ENCODE measurements at regions of chr16 and their contacts with region 1.

Region 1: GRCh38 chr16:56814537-56815432 is 50.2 kb upstream of the SLC12A3 start:
- DNase-seq: peak; percentile 65 to 86
- H3K4me3 ChIP-seq: no peak overlapping the region
- H3K4me3 Mint-ChIP-seq: peak overlapping the region; percentile 53
- H3K27ac Mint-ChIP-seq: peak overlapping the region; percentile 81
- H3K4me1 ChIP-seq: peaks cover 71% of the 10 kb centered on the region
- H3K4me1 Mint-ChIP-seq: peaks cover 39% of the 10 kb centered on the region
- H3K27me3 ChIP-seq: no peaks in the 10 kb centered on the region
- H3K27me3 Mint-ChIP-seq: no peaks in the 10 kb centered on the region
- CTCF ChIP-seq: no peak

Region 2: DNA sequence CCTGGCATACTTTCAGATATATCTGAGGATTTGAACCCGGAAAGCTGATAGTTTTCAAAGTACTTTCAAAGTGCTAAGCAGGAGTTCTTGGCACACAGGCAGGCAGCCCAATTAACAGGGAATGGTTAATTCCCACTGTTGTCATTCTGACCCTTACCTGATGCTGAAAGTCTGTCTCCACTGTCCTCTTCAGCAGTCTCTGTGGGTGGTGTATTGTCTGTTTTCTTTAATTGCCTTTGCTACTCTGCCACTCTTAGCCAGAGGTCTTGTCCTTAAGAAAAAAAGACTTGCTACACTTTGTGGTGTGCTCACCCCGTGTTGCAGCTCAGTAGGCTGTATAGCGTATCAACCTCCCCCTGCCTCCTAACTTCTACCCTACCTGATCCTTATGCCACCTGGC is 13.0 kb before region 1 on chr16:
- CTCF ChIA-PET with region 1: no interaction called
- POLR2A ChIA-PET with region 1: no interaction called
- intact Hi-C with region 1: no loop called
- DNase-seq: no peak
- H3K4me3 ChIP-seq: no peak overlapping the region
- H3K4me3 Mint-ChIP-seq: no peak overlapping the region
- H3K27ac Mint-ChIP-seq: no peak overlapping the region
- H3K4me1 ChIP-seq: peaks cover 25% of the 10 kb centered on the region
- H3K4me1 Mint-ChIP-seq: peaks cover 18% of the 10 kb centered on the region
- H3K27me3 ChIP-seq: no peaks in the 10 kb centered on the region
- H3K27me3 Mint-ChIP-seq: no peaks in the 10 kb centered on the region
- CTCF ChIP-seq: no peak

Region 3: DNA sequence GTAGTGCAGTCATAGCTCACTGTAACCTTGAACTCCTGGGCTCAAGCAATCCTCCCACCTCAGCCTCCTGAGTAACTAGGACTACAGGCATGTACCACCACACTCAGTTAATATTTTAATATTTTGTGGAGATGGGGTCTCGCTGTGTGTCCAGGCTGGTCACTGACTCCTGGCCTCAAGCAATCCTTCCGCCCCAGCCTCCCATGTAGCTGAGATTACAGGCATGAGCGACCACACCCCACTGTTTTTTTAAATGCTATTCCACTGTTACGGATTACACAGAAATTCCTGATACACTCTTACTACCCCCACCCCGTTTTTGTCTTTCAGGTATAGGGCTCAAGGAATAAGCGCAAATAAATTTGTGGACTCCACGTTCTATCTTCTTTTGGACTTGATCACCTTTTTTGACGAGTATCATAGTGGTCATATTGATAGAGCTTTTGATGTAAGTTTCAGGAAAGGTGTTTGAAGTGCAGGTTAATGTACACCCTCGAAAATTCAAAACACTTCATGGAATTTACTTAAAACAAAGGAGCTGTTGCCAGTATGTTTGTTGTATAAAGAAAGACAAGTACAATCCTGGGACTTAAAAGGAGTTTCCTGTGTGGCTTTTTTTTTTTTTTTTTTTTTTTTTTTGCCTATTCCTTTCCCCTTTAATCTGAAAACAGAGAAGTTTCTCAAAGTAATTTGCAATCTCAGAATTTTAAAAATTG is 24.0 kb after region 1 on chr16:
- CTCF ChIA-PET with region 1: no interaction called
- POLR2A ChIA-PET with region 1: interaction called, 8 read pairs
- intact Hi-C with region 1: loop called (anchors 2 kb)
- DNase-seq: peak in 1 of 2 experiments; percentile 32
- H3K4me3 ChIP-seq: no peak overlapping the region
- H3K4me3 Mint-ChIP-seq: peak overlapping the region; percentile 13
- H3K27ac Mint-ChIP-seq: peak overlapping the region; percentile 60
- H3K4me1 ChIP-seq: peaks cover 44% of the 10 kb centered on the region
- H3K4me1 Mint-ChIP-seq: peaks cover 28% of the 10 kb centered on the region
- H3K27me3 ChIP-seq: no peaks in the 10 kb centered on the region
- H3K27me3 Mint-ChIP-seq: no peaks in the 10 kb centered on the region
- CTCF ChIP-seq: no peak